ENCODE measurements at regions of chr2 and their contacts with region 1.

Region 1: GRCh38 chr2:199424160-199424559 is 33.6 kb downstream of the SATB2 start:
- DNase-seq: no peak
- H3K4me3 ChIP-seq: no peak overlapping the region
- H3K27ac ChIP-seq: no peak overlapping the region
- H3K4me1 ChIP-seq: peaks cover 0 to 4% (median 0%) of the 10 kb centered on the region in 4 experiments; a peak in 1 of 7 replicates
- H3K27me3 ChIP-seq: no peaks in the 10 kb centered on the region; a peak in 1 of 7 replicates
- CTCF ChIP-seq: no peak
- EP300 ChIP-seq: no peak
- POLR2A ChIP-seq: no peak
- RAD21 ChIP-seq: no peak

Region 2: GRCh38 chr2:199405241-199405640 is 18.9 kb before region 1 on chr2:
- CTCF ChIA-PET with region 1: interaction called, 10 read pairs
- POLR2A ChIA-PET with region 1: no interaction called
- DNase-seq: no peak
- H3K4me3 ChIP-seq: no peak overlapping the region
- H3K27ac ChIP-seq: no peak overlapping the region
- H3K4me1 ChIP-seq: peaks cover 0 to 2% (median 2%) of the 10 kb centered on the region in 4 experiments; a peak in 2 of 7 replicates
- H3K27me3 ChIP-seq: no peaks in the 10 kb centered on the region
- CTCF ChIP-seq: peak in 2 of 3 experiments; percentile 48 to 59; a peak in 2 of 4 replicates
- EP300 ChIP-seq: no peak
- POLR2A ChIP-seq: no peak
- RAD21 ChIP-seq: peak; percentile 59 to 69

Region 3: GRCh38 chr2:199446996-199447576 is 22.9 kb after region 1 on chr2:
- CTCF ChIA-PET with region 1: no interaction called
- POLR2A ChIA-PET with region 1: no interaction called
- DNase-seq: no peak
- H3K4me3 ChIP-seq: no peak overlapping the region
- H3K27ac ChIP-seq: no peak overlapping the region
- H3K4me1 ChIP-seq: peaks cover 3 to 5% (median 4%) of the 10 kb centered on the region in 4 experiments; a peak in 4 of 7 replicates
- H3K27me3 ChIP-seq: no peaks in the 10 kb centered on the region
- CTCF ChIP-seq: no peak
- EP300 ChIP-seq: no peak
- POLR2A ChIP-seq: no peak
- RAD21 ChIP-seq: no peak

Region 4: DNA sequence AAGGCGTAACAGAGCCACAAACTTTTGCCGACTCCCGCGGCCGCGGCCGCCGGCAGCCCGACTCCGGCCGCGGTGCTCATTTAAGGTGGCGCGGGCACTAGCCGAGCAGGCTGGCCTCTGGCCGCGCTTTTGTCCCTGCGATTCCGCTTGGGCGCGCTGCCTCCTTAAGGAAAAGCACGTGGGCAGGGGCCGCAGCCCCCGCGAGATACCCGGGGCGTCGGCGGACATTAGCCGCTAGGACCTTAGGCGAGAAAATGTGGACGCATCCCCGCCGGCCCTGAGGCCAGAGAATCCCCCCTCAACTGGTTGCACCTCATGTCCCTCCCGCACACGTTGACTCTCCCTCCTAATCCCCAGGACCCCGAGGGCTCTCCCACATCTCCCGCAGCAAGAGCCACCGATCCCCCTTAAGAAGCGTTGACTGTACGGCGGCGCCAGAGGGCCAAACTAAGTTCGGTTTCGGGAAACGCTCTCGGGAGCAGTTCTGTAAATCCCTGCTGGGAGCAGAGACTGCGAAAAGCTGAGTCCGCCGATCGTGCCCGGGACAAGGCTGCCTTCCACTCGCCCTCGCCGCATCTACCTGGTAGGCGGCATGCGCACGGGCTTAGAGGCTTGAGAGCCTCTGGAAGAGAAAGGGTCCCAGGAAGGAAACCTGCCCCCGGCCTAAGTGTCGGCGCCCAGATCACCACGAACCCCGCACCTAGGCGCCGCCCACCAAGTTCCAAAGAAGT is 35.3 kb after region 1 on chr2:
- CTCF ChIA-PET with region 1: no interaction called
- POLR2A ChIA-PET with region 1: no interaction called
- DNase-seq: peak; percentile 82 to 92
- H3K4me3 ChIP-seq: peak overlapping the region; percentile 60 to 73 (median 64)
- H3K27ac ChIP-seq: no peak overlapping the region
- H3K4me1 ChIP-seq: peaks cover 0 to 26% (median 10%) of the 10 kb centered on the region in 4 experiments; a peak in 6 of 7 replicates
- H3K27me3 ChIP-seq: peaks cover 21 to 76% (median 52%) of the 10 kb centered on the region in 4 experiments; a peak in 6 of 7 replicates
- CTCF ChIP-seq: no peak
- EP300 ChIP-seq: no peak
- POLR2A ChIP-seq: no peak; a peak in 1 of 3 replicates
- RAD21 ChIP-seq: no peak; a peak in 1 of 4 replicates

Measured in H1 (cell line).